ENCODE measurements at regions of chr3 and their contacts with region 1.

Region 1: GRCh38 chr3:149812606-149813366 is at the start of gene RNF13:
- DNase-seq: peak; percentile 82 to 95 (median 90)
- ATAC-seq: peak; percentile 95
- H3K4me3 ChIP-seq: peak within 1 kb of the TSS; percentile 78
- H3K4me3 Mint-ChIP-seq: peak within 1 kb of the TSS; percentile 98
- H3K27ac ChIP-seq: peak within 1 kb of the TSS; percentile 86 to 95
- H3K27ac Mint-ChIP-seq: peak within 1 kb of the TSS; percentile 96
- H3K4me1 ChIP-seq: peaks cover 23% of the 10 kb centered on the region
- H3K4me1 Mint-ChIP-seq: peaks cover 60% of the 10 kb centered on the region
- H3K27me3 ChIP-seq: no peaks in the 10 kb centered on the region
- H3K27me3 Mint-ChIP-seq: peaks cover 4% of the 10 kb centered on the region
- CTCF ChIP-seq: no peak
- total RNA-seq, gene RNF13: 39.1 to 44.1 TPM

Region 2: DNA sequence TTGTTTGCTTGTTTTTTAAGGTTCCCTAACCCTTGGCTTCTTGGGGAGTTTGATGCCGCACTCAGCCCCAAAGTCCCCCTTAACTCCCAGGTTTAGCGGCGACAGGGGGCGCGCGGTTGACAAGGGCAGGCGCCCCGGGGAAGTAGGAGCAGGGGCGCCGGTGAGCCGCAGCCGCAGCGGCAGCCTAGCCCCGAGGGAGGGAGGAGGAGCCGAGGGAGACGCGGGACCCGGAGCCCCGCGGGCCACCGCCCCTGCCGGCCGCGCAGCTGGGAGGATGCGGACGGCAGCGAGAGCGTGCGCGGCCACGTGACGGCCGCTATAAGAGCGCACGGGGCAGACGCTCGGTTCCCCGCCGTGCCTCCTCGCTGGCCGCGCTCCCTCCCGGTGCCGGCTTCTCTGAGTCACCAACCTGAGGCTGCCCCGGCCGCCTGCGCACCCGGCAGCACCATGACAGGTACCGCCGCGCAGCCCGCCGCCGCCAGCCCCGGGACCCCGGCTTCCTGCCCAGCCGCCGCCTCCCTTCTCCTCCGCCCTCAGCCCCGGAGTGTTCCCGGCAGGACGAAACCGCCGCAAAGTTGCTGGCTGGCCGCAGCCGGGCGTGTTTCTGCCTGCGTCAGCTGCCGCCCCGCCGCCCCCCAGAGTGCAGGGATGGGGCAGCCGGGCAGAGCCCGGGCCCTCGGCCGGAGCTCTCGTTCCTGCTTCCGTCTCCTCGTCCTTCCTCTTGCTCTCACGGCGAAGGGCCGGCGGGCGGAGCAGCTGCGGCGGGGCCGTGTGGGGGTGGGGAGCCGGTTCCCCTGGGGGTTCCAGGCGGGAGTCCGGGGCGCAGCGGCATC is 821.4 kb before region 1 on chr3 and contains the start of gene GYG1:
- CTCF ChIA-PET with region 1: interaction called, 4 read pairs
- POLR2A ChIA-PET with region 1: no interaction called
- intact Hi-C with region 1: loop called in 1 of 2 experiments (anchors 10 kb)
- DNase-seq: peak; percentile 61 to 95 (median 76)
- ATAC-seq: peak; percentile 88
- H3K4me3 ChIP-seq: peak within 1 kb of the TSS; percentile 60
- H3K4me3 Mint-ChIP-seq: peak within 1 kb of the TSS; percentile 87
- H3K27ac ChIP-seq: peak within 1 kb of the TSS; percentile 55 to 56
- H3K27ac Mint-ChIP-seq: peak within 1 kb of the TSS; percentile 76
- H3K4me1 ChIP-seq: peaks cover 22% of the 10 kb centered on the region
- H3K4me1 Mint-ChIP-seq: peaks cover 27% of the 10 kb centered on the region
- H3K27me3 ChIP-seq: no peaks in the 10 kb centered on the region
- H3K27me3 Mint-ChIP-seq: no peaks in the 10 kb centered on the region
- CTCF ChIP-seq: peak; percentile 40
- total RNA-seq, gene GYG1: 21.0 to 22.3 TPM

Region 3: GRCh38 chr3:149752051-149752787 is 60.6 kb before region 1 on chr3 and contains the start of gene COMMD2:
- CTCF ChIA-PET with region 1: interaction called, 12 read pairs
- POLR2A ChIA-PET with region 1: interaction called, 31 read pairs
- intact Hi-C with region 1: loop called (anchors 2 kb)
- DNase-seq: peak; percentile 53 to 89 (median 66)
- ATAC-seq: peak; percentile 86
- H3K4me3 ChIP-seq: peak within 1 kb of the TSS; percentile 85
- H3K4me3 Mint-ChIP-seq: peak within 1 kb of the TSS; percentile 99
- H3K27ac ChIP-seq: peak within 1 kb of the TSS; percentile 69
- H3K27ac Mint-ChIP-seq: peak within 1 kb of the TSS; percentile 96
- H3K4me1 ChIP-seq: peaks cover 12% of the 10 kb centered on the region
- H3K4me1 Mint-ChIP-seq: peaks cover 45% of the 10 kb centered on the region
- H3K27me3 ChIP-seq: no peaks in the 10 kb centered on the region
- H3K27me3 Mint-ChIP-seq: no peaks in the 10 kb centered on the region
- CTCF ChIP-seq: peak; percentile 68
- total RNA-seq, gene COMMD2: 42.0 to 46.8 TPM

Region 4: DNA sequence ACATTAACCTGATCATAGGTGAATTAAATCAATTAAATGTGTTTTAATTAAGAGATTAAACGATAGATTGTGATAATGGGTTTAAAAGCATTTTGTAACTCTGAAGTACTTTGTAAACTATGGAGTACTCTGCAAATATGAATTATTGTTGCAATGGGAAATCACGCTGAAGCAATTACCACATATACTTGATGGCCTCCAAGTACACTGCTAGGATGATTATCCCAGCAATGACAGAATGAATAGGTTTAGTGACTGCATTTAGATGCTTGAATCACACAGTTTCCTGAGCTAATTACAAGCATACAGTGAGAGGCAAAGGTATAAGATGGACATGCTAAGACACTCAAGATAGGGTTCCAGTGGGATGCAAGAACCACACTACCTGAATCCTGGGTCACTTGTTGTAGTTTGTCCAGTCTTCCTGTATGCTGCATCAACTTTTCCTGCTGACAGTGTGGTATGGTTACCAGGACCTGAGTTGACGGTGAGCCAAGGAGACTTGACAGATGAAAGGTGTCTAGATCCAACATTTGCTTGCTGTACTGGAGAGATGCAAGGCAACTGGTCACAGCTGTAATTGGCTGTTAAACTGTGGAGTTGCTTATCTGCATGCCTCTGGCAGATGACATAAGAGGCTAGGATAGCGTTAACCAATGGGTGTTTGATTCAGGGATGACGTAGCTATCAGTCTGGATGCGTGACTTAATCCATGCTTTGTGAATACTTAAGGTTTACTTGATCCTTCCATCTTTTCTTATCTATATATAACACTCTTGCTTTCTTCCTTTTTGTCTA is 38.2 kb after region 1 on chr3:
- CTCF ChIA-PET with region 1: interaction called, 3 read pairs
- POLR2A ChIA-PET with region 1: no interaction called
- intact Hi-C with region 1: loop called in 1 of 2 experiments (anchors 5 kb)
- DNase-seq: no peak
- ATAC-seq: no peak
- H3K4me3 ChIP-seq: no peak overlapping the region
- H3K4me3 Mint-ChIP-seq: no peak overlapping the region
- H3K27ac ChIP-seq: no peak overlapping the region
- H3K27ac Mint-ChIP-seq: no peak overlapping the region
- H3K4me1 ChIP-seq: no peaks in the 10 kb centered on the region
- H3K4me1 Mint-ChIP-seq: peaks cover 44% of the 10 kb centered on the region
- H3K27me3 ChIP-seq: no peaks in the 10 kb centered on the region
- H3K27me3 Mint-ChIP-seq: no peaks in the 10 kb centered on the region
- CTCF ChIP-seq: no peak

Region 5: DNA sequence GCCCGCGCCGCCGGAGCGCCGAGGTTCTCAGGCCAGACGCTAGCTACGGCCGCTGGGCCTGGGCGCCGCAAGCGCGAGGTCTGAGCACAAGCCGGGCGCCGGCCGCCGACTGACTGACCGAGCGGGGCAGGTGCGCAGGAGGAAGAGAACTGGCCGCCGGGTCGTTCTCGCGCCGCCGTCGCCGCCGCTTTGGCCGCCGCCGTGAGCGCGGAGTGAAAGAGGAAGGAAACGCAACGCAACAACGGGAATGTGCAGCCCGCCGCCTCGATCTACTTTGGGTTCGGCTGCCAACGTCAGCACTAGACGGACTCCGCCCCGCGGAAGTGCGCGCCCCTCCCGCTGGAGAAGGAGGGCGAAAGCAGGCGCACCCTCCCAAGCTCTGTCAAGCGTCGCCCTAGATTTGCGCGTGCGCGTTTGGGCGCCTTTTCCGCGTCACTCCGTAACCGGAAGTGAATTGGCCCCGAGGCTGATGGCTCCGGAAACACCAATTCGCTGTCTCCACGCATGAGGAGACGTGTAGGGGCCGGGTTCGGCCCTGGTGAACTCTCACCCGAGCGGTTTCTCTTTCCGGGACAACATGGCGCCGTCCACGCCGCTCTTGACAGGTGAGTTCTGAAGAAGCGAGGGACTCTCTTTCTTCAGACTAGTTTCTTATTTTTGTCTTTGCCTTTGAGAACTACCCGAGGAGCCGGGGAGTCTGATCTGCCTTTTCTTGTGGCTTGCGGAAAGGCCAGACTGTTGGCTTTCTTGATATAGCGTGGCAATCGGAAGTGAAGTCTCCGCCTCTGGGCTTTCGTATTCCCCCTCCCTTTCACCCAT is 733.6 kb after region 1 on chr3 and contains the starts of genes EIF2A and SERP1:
- CTCF ChIA-PET with region 1: no interaction called
- POLR2A ChIA-PET with region 1: no interaction called
- intact Hi-C with region 1: loop called (anchors 2 to 5 kb)
- DNase-seq: peak; percentile 98 to 100 (median 99)
- ATAC-seq: peak; percentile 88
- H3K4me3 ChIP-seq: peak within 1 kb of the TSS; percentile 86
- H3K4me3 Mint-ChIP-seq: peak within 1 kb of the TSS; percentile 91
- H3K27ac ChIP-seq: peak within 1 kb of the TSS; percentile 98 to 99
- H3K27ac Mint-ChIP-seq: peak within 1 kb of the TSS; percentile 93
- H3K4me1 ChIP-seq: peaks cover 19% of the 10 kb centered on the region
- H3K4me1 Mint-ChIP-seq: peaks cover 73% of the 10 kb centered on the region
- H3K27me3 ChIP-seq: no peaks in the 10 kb centered on the region
- H3K27me3 Mint-ChIP-seq: no peaks in the 10 kb centered on the region
- CTCF ChIP-seq: no peak
- total RNA-seq, gene EIF2A: 115 to 122 TPM
- total RNA-seq, gene SERP1: 141 to 147 TPM

Region 6: DNA sequence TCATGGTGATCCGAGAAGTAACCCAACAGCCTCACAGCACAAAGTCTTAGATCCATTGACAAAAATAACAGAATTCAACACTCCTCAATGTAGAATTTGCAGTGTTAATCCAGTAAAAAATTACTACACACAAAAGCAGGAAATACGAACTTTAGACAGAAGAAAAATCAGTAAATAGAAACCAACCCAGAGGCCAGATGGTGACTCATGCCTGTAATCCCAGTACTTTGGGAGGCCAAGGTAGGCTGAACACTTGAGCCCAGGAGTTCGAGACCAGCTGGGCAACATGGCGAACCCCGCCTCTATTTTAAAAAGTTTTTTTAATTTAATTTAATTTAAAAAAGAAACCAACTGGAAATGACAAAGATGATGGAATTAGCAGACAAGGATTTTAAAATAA is 826.5 kb after region 1 on chr3:
- CTCF ChIA-PET with region 1: no interaction called
- POLR2A ChIA-PET with region 1: no interaction called
- intact Hi-C with region 1: no loop called
- DNase-seq: no peak
- ATAC-seq: no peak
- H3K4me3 ChIP-seq: no peak overlapping the region
- H3K4me3 Mint-ChIP-seq: no peak overlapping the region
- H3K27ac ChIP-seq: no peak overlapping the region
- H3K27ac Mint-ChIP-seq: no peak overlapping the region
- H3K4me1 ChIP-seq: peaks cover 18% of the 10 kb centered on the region
- H3K4me1 Mint-ChIP-seq: peaks cover 24% of the 10 kb centered on the region
- H3K27me3 ChIP-seq: peaks cover 0 to 6% of the 10 kb centered on the region in 2 experiments
- H3K27me3 Mint-ChIP-seq: peaks cover 16% of the 10 kb centered on the region
- CTCF ChIP-seq: no peak

Region 7: DNA sequence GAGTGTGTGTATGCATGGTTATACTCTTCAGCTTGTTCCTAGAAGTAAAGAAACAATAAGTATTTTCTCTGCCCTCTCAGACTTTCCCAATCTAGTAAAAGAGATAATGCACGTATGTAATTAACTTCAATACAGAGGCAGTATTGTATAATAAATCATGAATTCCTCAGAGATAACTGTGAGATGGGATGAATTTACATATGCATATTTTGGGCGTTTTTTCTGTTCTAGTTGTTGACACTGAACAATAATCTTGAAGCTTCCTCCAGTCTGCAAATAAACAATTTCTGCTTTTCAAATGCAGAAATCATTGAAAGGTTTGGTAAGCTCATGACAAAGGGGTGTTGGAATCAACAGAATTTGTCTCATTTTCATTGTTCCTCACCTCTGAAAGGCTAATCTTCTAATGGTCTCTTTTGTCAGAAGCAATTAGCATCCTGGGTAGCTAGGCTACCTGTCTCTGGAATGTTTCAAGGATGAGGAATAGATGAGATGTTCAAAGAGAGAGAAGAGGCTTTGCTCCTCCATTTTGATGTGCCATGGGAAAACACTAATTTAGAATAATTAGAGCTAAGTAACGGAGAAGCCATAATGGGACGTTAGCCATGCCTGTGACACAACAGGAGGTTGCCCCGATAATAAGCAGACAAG is 993.5 kb after region 1 on chr3:
- CTCF ChIA-PET with region 1: no interaction called
- POLR2A ChIA-PET with region 1: no interaction called
- intact Hi-C with region 1: no loop called
- DNase-seq: no peak
- ATAC-seq: no peak
- H3K4me3 ChIP-seq: no peak overlapping the region
- H3K4me3 Mint-ChIP-seq: no peak overlapping the region
- H3K27ac ChIP-seq: no peak overlapping the region
- H3K27ac Mint-ChIP-seq: no peak overlapping the region
- H3K4me1 ChIP-seq: no peaks in the 10 kb centered on the region
- H3K4me1 Mint-ChIP-seq: no peaks in the 10 kb centered on the region
- H3K27me3 ChIP-seq: no peaks in the 10 kb centered on the region
- H3K27me3 Mint-ChIP-seq: peaks cover 3% of the 10 kb centered on the region
- CTCF ChIP-seq: no peak

Measured in CD4-positive, alpha-beta T cell (primary cell).